Activated T-helper 1 cell treated with anti-CD3 and anti-CD28 coated beads, Interleukin-12 subunit alpha, Interleukin-12 subunit beta, Interleukin-2, Interleukin-4 antibody, amounts not matched to agents 30 ng/mL and 10 ng/mL and 1 ng/mL, durations not matched to agents 14 hours and 24 hours and 36 hours (primary cell): ENCODE measurements at regions of chr22 and their contacts with region 1.

Region 1: GRCh38 chr22:46296257-46297150 is at the start of gene GTSE1:
- DNase-seq: peak; percentile 97
- H3K4me3 Mint-ChIP-seq: peak within 1 kb of the TSS; percentile 91
- H3K27ac Mint-ChIP-seq: peak within 1 kb of the TSS; percentile 94
- H3K4me1 Mint-ChIP-seq: peaks cover 52% of the 10 kb centered on the region
- H3K27me3 Mint-ChIP-seq: no peaks in the 10 kb centered on the region
- total RNA-seq, gene GTSE1: 39.0 and 39.9 TPM in 2 replicates

Region 2: GRCh38 chr22:45671768-45672563 is 624.5 kb before region 1 on chr22 and contains the start of gene ATXN10:
- intact Hi-C with region 1: loop called (anchors 1 kb)
- DNase-seq: peak; percentile 69
- H3K4me3 Mint-ChIP-seq: peak within 1 kb of the TSS; percentile 96
- H3K27ac Mint-ChIP-seq: peak within 1 kb of the TSS; percentile 89
- H3K4me1 Mint-ChIP-seq: peaks cover 33% of the 10 kb centered on the region
- H3K27me3 Mint-ChIP-seq: peaks cover 4% of the 10 kb centered on the region
- total RNA-seq, gene ATXN10: 110 and 119 TPM in 2 replicates

Region 3: DNA sequence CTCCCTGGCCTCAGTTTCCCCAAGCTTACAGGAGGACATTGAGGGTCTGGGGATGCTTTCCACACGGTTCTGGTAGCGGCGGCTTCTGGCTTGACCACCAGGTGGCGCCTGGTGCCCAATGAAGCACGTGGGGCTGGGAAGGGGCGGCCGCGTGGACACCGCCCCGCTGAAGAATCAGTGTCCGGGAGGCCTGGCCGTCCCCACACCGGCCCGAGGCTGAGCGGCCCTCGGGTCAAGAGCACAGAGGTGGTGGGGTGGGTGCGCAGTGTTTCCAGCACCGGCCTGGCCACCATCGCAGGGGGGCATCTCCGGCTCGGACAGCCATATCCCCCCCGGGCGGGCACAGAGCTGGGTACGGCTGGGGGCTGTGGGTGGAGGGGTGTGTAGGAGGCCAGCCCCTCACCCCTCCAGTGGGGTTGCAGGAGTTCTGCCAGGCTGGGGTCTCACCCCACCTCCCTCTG is 174.0 kb before region 1 on chr22:
- intact Hi-C with region 1: loop called (anchors 1 kb)
- DNase-seq: peak; percentile 56
- H3K4me3 Mint-ChIP-seq: no peak overlapping the region
- H3K27ac Mint-ChIP-seq: no peak overlapping the region
- H3K4me1 Mint-ChIP-seq: no peaks in the 10 kb centered on the region
- H3K27me3 Mint-ChIP-seq: peaks cover 2% of the 10 kb centered on the region

Region 4: GRCh38 chr22:46150034-46150654 is 146.4 kb before region 1 on chr22 and contains the start of gene PPARA:
- intact Hi-C with region 1: loop called (anchors 1 kb)
- DNase-seq: peak; percentile 88
- H3K4me3 Mint-ChIP-seq: peak within 1 kb of the TSS; percentile 85
- H3K27ac Mint-ChIP-seq: peak within 1 kb of the TSS; percentile 63
- H3K4me1 Mint-ChIP-seq: peaks cover 18% of the 10 kb centered on the region
- H3K27me3 Mint-ChIP-seq: peaks cover 21% of the 10 kb centered on the region
- total RNA-seq, gene PPARA: 11.6 and 14.3 TPM in 2 replicates

Region 5: GRCh38 chr22:46267431-46268279 is 28.8 kb before region 1 on chr22 and contains the start of gene TTC38:
- intact Hi-C with region 1: loop called (anchors 1 kb)
- DNase-seq: peak; percentile 40
- H3K4me3 Mint-ChIP-seq: peak within 1 kb of the TSS; percentile 93
- H3K27ac Mint-ChIP-seq: peak within 1 kb of the TSS; percentile 73
- H3K4me1 Mint-ChIP-seq: peaks cover 18% of the 10 kb centered on the region
- H3K27me3 Mint-ChIP-seq: peaks cover 24% of the 10 kb centered on the region
- total RNA-seq, gene TTC38: 23.0 and 30.2 TPM in 2 replicates

Region 6: GRCh38 chr22:46335201-46336118 is 39.0 kb after region 1 on chr22 and contains the start of gene TRMU:
- intact Hi-C with region 1: loop called (anchors 1 kb)
- DNase-seq: peak; percentile 74
- H3K4me3 Mint-ChIP-seq: peak within 1 kb of the TSS; percentile 95
- H3K27ac Mint-ChIP-seq: peak within 1 kb of the TSS; percentile 96
- H3K4me1 Mint-ChIP-seq: peaks cover 34% of the 10 kb centered on the region
- H3K27me3 Mint-ChIP-seq: no peaks in the 10 kb centered on the region
- total RNA-seq, gene TRMU: 81.0 and 85.5 TPM in 2 replicates